Right cardiac atrium (tissue), 5 donors: ENCODE measurements at regions of chr12 and their contacts with region 1.

Region 1: GRCh38 chr12:31406345-31406744 is 80.4 kb upstream of the SINHCAF start:
- DNase-seq: no peak
- ATAC-seq: no peak
- H3K4me3 ChIP-seq: no peak overlapping the region
- H3K27ac ChIP-seq: no peak overlapping the region
- H3K4me1 ChIP-seq: no peaks in the 10 kb centered on the region
- H3K27me3 ChIP-seq: no peaks in the 10 kb centered on the region

Region 2: GRCh38 chr12:31506515-31507306 is 100.4 kb after region 1 on chr12:
- intact Hi-C with region 1: no loop called
- DNase-seq: no peak
- ATAC-seq: peak in 1 of 2 donors; percentile 62
- H3K4me3 ChIP-seq: no peak overlapping the region
- H3K27ac ChIP-seq: no peak overlapping the region
- H3K4me1 ChIP-seq: peaks cover 1% of the 10 kb centered on the region
- H3K27me3 ChIP-seq: no peaks in the 10 kb centered on the region

Region 3: DNA sequence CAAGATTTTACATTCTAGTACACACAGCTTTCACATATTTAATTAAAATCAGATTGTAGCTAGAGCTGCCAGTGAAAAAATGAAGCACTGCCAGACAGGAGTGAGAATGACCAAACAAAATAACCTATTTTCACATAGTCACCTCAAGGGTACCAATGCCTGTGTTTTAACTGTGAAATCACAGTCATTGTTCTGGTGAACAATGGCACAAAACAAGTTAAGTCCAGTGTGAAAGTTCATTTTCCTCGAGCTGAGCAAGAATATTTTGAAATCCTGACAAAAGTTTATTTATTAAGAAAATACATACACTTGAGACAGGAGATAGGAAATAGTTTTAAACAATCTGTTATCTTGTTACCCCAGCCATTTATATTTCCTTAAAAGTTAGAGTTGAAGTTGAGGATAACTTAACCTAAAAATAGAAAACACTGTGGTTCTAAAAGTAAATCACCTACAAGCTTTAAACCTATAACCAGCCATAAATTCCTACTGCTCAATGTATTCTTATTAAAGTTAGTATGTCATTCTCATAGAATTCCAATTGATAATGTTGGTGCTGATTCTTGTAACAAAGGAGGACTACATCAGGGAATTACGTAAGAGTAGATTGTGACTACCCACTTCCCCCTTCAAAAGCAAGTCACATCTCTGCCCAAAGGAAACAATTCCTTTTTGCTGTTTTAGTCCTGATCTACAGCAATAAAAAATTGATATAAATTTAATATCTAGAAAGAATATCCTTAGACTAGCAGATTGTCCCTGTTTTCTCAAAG is 168.6 kb after region 1 on chr12:
- intact Hi-C with region 1: no loop called
- DNase-seq: no peak
- ATAC-seq: peak in 1 of 2 donors; percentile 64
- H3K4me3 ChIP-seq: no peak overlapping the region
- H3K27ac ChIP-seq: no peak overlapping the region
- H3K4me1 ChIP-seq: peaks cover 9% of the 10 kb centered on the region
- H3K27me3 ChIP-seq: no peaks in the 10 kb centered on the region

Region 4: DNA sequence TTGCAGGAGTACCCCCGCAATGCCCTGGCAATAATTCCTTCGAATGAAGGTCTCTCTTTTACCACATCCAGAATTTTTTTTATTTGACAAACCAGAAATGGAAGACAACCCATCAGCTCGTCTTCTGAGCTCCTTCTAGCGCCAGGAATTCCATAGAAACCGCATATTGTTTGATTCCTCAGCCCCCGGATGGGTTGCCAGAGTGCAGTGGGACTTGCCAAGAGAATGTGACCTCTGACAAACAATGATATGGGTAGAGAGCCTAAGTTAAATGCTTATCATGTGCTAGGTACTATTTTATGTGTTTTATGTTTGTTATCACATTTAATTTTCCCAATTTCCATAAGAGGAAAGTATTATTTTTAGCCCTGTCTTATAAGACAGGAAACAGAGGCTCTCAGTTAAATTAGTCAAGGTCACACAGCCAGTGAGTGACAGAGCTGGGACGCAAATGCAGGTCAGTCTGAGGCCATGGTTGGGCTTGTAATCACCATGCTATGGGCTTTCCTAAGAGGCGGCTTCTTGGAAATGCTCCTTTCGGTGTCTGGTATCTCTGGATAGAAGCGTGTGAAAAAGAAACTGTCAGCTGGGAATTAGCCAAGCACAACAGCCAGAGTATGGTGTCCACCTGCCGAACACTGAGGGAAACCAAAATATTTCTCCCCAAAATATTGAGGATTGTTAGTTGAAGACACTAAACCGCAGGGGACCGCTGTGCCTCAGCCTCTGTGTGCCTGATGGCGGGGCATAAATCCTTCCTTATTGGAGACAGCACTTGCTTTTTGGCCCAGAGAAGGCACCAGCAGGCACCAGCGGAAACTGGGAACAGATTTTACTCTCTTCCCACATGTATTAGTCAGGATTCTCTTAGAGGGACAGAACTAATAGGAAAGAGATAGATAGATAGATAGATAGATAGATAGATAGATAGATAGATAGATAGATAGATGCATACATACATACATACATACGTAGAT is 223.7 kb after region 1 on chr12:
- intact Hi-C with region 1: loop called in 1 of 4 experiments (anchors 5 kb)
- DNase-seq: peak; percentile 37 to 61 (median 59)
- ATAC-seq: peak; percentile 87 to 94
- H3K4me3 ChIP-seq: no peak overlapping the region
- H3K27ac ChIP-seq: no peak overlapping the region
- H3K4me1 ChIP-seq: peaks cover 2% of the 10 kb centered on the region
- H3K27me3 ChIP-seq: no peaks in the 10 kb centered on the region

Region 5: DNA sequence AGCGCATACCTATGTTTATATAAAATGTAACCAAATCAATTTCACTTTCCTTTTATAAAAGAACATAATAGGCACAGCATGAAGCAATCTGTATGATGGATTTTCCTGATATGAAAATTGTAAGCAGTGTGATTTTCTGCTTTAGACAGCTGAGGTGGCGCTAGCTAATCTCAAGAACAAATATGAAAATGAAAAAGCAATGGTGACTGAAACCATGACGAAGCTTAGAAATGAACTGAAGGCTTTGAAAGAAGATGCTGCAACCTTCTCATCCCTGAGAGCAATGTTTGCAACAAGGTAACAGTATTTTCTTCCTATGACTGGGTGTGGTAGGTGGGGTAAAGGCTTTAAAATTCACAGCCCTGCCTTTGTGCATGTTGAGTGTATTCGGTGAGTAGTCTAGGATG is 928.0 kb after region 1 on chr12:
- intact Hi-C with region 1: loop called in 1 of 4 experiments (anchors 10 kb)
- DNase-seq: no peak
- ATAC-seq: no peak
- H3K4me3 ChIP-seq: no peak overlapping the region
- H3K27ac ChIP-seq: no peak overlapping the region
- H3K4me1 ChIP-seq: no peaks in the 10 kb centered on the region
- H3K27me3 ChIP-seq: no peaks in the 10 kb centered on the region